CD4-positive, alpha-beta T cell (primary cell): ENCODE measurements at regions of chr15 and their contacts with region 1.

Region 1: DNA sequence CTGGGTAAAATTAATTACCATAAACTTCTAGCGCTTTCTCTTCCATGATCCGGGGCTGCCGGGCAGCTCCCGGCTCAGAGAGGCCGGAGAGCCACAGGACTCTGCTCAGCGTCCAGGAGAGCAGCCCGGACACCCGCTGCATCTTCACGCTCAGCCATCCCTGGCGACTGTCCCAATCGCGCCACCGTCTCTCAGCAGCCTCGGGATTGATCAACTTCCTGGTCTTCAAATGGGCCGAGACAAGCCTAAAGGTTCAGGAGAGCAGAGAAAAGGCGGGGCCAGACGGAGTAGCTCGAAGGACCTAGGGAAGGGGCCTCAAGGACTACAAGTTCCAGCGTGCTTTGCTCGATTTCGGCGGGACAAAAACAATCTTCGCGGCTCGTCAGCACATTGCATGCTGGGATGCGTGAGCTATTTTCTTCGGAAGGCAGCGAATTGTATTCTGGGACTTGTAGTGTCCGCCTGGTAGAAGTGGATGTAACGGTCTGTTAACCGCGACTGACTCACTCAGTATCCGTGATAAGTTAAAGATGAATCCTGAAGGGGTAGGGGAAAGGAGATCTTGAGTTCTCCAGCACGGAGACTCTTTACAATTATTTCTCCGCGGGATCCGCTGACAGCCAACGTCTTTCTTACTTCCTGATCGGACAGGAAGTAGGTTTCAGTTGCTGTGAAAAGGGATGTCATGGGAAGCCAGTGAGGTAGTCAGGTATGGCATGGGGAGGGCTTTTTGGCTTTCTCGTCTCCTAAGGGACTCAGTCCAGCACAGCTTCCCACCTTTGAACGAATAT is at the start of gene CIAO2A:
- DNase-seq: peak; percentile 79 to 97 (median 87)
- ATAC-seq: peak; percentile 71
- H3K4me3 ChIP-seq: peak within 1 kb of the TSS; percentile 73
- H3K4me3 Mint-ChIP-seq: peak within 1 kb of the TSS; percentile 94
- H3K27ac ChIP-seq: peak within 1 kb of the TSS; percentile 71 to 90
- H3K27ac Mint-ChIP-seq: peak within 1 kb of the TSS; percentile 93
- H3K4me1 ChIP-seq: peaks cover 61% of the 10 kb centered on the region
- H3K4me1 Mint-ChIP-seq: peaks cover 79% of the 10 kb centered on the region
- H3K27me3 ChIP-seq: no peaks in the 10 kb centered on the region
- H3K27me3 Mint-ChIP-seq: no peaks in the 10 kb centered on the region
- CTCF ChIP-seq: no peak
- total RNA-seq, gene CIAO2A: 10.9 to 12.2 TPM

Region 2: GRCh38 chr15:63188926-63189871 is 904.6 kb before region 1 on chr15 and contains the start of gene RAB8B:
- CTCF ChIA-PET with region 1: no interaction called
- POLR2A ChIA-PET with region 1: interaction called, 3 read pairs
- intact Hi-C with region 1: loop called in 1 of 2 experiments (anchors 10 kb)
- DNase-seq: peak; percentile 94 to 99 (median 97)
- ATAC-seq: peak; percentile 69
- H3K4me3 ChIP-seq: peak within 1 kb of the TSS; percentile 88
- H3K4me3 Mint-ChIP-seq: peak within 1 kb of the TSS; percentile 96
- H3K27ac ChIP-seq: peak within 1 kb of the TSS; percentile 94 to 95
- H3K27ac Mint-ChIP-seq: peak within 1 kb of the TSS; percentile 95
- H3K4me1 ChIP-seq: peaks cover 28% of the 10 kb centered on the region
- H3K4me1 Mint-ChIP-seq: peaks cover 54% of the 10 kb centered on the region
- H3K27me3 ChIP-seq: no peaks in the 10 kb centered on the region
- H3K27me3 Mint-ChIP-seq: no peaks in the 10 kb centered on the region
- CTCF ChIP-seq: no peak
- total RNA-seq, gene RAB8B: 74.5 to 75.2 TPM

Region 3: DNA sequence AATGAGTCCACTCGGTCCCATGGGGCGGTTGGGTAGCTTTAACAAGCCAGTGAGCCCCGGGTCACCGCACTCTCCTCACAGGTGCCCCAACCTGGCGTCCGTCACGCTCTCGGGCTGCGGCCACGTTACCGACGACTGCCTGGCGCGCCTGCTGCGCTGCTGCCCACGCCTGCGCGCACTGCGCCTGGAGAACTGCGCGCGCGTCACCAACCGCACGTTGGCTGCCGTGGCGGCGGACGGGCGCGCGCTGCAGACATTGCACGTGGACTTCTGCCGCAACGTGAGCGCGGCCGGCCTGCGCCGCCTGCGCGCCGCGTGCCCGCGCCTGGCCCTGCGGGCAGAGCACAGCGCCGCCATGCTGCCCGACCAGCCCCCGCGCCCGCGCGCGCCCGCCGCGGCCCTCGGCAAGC is 493.2 kb before region 1 on chr15:
- CTCF ChIA-PET with region 1: no interaction called
- POLR2A ChIA-PET with region 1: interaction called, 4 read pairs
- intact Hi-C with region 1: loop called (anchors 10 kb)
- DNase-seq: peak; percentile 78 to 98 (median 88)
- ATAC-seq: peak; percentile 77
- H3K4me3 ChIP-seq: peak overlapping the region; percentile 79
- H3K4me3 Mint-ChIP-seq: peak overlapping the region; percentile 95
- H3K27ac ChIP-seq: peak overlapping the region; percentile 63 to 75
- H3K27ac Mint-ChIP-seq: peak overlapping the region; percentile 90
- H3K4me1 ChIP-seq: peaks cover 55% of the 10 kb centered on the region
- H3K4me1 Mint-ChIP-seq: peaks cover 73% of the 10 kb centered on the region
- H3K27me3 ChIP-seq: no peaks in the 10 kb centered on the region
- H3K27me3 Mint-ChIP-seq: no peaks in the 10 kb centered on the region
- CTCF ChIP-seq: no peak

Region 4: GRCh38 chr15:64153480-64154367 is 59.9 kb after region 1 on chr15:
- CTCF ChIA-PET with region 1: interaction called, 6 read pairs
- POLR2A ChIA-PET with region 1: interaction called, 5 read pairs
- intact Hi-C with region 1: loop called in 1 of 2 experiments (anchors 5 kb)
- DNase-seq: peak; percentile 85 to 95 (median 91)
- ATAC-seq: peak; percentile 96
- H3K4me3 ChIP-seq: no peak overlapping the region
- H3K4me3 Mint-ChIP-seq: peak overlapping the region; percentile 88
- H3K27ac ChIP-seq: peak overlapping the region in 1 of 2 donors; percentile 30
- H3K27ac Mint-ChIP-seq: peak overlapping the region; percentile 26
- H3K4me1 ChIP-seq: peaks cover 43% of the 10 kb centered on the region
- H3K4me1 Mint-ChIP-seq: peaks cover 42% of the 10 kb centered on the region
- H3K27me3 ChIP-seq: peaks cover 18% of the 10 kb centered on the region in 2 experiments
- H3K27me3 Mint-ChIP-seq: peaks cover 30% of the 10 kb centered on the region
- CTCF ChIP-seq: peak; percentile 90

Region 5: DNA sequence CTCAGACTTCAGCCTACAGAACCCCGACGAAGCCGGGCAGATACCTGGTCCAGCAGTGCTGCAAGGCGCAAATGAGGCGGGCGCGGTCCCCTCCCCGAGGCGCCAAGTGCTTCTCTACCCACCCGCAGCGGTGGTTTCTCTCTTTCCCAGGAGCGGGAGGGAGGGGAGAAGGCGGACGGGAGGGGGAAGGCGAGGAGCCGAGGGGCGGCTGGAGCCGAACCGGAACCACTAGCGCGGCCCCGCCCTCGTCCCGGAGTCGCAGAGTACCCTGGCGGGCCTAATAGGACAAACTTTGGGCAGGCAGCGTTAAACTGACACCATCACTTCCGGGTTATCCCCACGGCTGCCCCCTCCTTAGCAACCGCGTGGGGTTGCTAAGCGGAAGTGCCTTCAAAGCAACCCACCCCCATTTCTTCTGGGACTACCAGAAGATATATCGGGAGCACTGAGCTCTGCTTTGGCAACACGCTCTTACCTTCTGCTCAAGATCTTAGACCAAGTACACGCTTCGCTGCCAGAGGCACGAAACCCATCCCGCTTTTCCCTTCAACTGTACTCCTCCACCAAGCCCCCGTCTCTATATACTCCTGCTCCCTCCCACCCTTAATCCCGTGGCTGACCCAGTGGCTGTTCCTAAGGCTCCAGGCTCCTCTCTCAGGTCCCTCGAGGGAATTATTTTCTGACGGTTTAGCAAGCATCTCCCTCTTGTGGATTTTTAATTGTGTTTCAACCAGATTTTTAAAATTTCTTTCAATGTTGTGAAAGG is 262.3 kb after region 1 on chr15 and contains the start of gene CSNK1G1:
- CTCF ChIA-PET with region 1: no interaction called
- POLR2A ChIA-PET with region 1: no interaction called
- intact Hi-C with region 1: loop called in 1 of 2 experiments (anchors 10 kb)
- DNase-seq: peak; percentile 80 to 97 (median 89)
- ATAC-seq: peak; percentile 96
- H3K4me3 ChIP-seq: peak within 1 kb of the TSS; percentile 95
- H3K4me3 Mint-ChIP-seq: peak within 1 kb of the TSS; percentile 96
- H3K27ac ChIP-seq: peak within 1 kb of the TSS; percentile 49 to 55
- H3K27ac Mint-ChIP-seq: peak within 1 kb of the TSS; percentile 87
- H3K4me1 ChIP-seq: peaks cover 16% of the 10 kb centered on the region
- H3K4me1 Mint-ChIP-seq: peaks cover 22% of the 10 kb centered on the region
- H3K27me3 ChIP-seq: no peaks in the 10 kb centered on the region
- H3K27me3 Mint-ChIP-seq: no peaks in the 10 kb centered on the region
- CTCF ChIP-seq: peak; percentile 34
- total RNA-seq, gene CSNK1G1: 12.2 to 13.7 TPM

Region 6: GRCh38 chr15:64989416-64990167 is 895.8 kb after region 1 on chr15 and contains the start of gene SPG21:
- CTCF ChIA-PET with region 1: no interaction called
- POLR2A ChIA-PET with region 1: no interaction called
- intact Hi-C with region 1: loop called in 1 of 2 experiments (anchors 10 kb)
- DNase-seq: peak; percentile 71 to 96 (median 87)
- ATAC-seq: peak; percentile 88
- H3K4me3 ChIP-seq: peak within 1 kb of the TSS; percentile 97
- H3K4me3 Mint-ChIP-seq: peak within 1 kb of the TSS; percentile 91
- H3K27ac ChIP-seq: peak within 1 kb of the TSS; percentile 63 to 66
- H3K27ac Mint-ChIP-seq: peak within 1 kb of the TSS; percentile 87
- H3K4me1 ChIP-seq: peaks cover 29% of the 10 kb centered on the region
- H3K4me1 Mint-ChIP-seq: peaks cover 53% of the 10 kb centered on the region
- H3K27me3 ChIP-seq: no peaks in the 10 kb centered on the region
- H3K27me3 Mint-ChIP-seq: no peaks in the 10 kb centered on the region
- CTCF ChIP-seq: no peak
- total RNA-seq, gene SPG21: 29.4 to 32.7 TPM